HEK293T (cell line): ENCODE measurements at regions of chr12 and their contacts with region 1.

Region 1: GRCh38 chr12:64696080-64696741 is 63.0 kb downstream of the GNS start:
- DNase-seq: peak; percentile 29

Region 2: GRCh38 chr12:64550755-64551154 is 145.5 kb before region 1 on chr12:
- CTCF ChIA-PET with region 1: interaction called, 31 read pairs
- POLR2A ChIA-PET with region 1: no interaction called
- DNase-seq: no peak

Region 3: GRCh38 chr12:64608901-64609535 is 87.2 kb before region 1 on chr12:
- CTCF ChIA-PET with region 1: interaction called, 12 read pairs
- POLR2A ChIA-PET with region 1: interaction called, 6 read pairs
- DNase-seq: peak; percentile 59

Region 4: GRCh38 chr12:64669270-64669842 is 26.9 kb before region 1 on chr12:
- CTCF ChIA-PET with region 1: no interaction called
- POLR2A ChIA-PET with region 1: no interaction called
- DNase-seq: no peak

Region 5: DNA sequence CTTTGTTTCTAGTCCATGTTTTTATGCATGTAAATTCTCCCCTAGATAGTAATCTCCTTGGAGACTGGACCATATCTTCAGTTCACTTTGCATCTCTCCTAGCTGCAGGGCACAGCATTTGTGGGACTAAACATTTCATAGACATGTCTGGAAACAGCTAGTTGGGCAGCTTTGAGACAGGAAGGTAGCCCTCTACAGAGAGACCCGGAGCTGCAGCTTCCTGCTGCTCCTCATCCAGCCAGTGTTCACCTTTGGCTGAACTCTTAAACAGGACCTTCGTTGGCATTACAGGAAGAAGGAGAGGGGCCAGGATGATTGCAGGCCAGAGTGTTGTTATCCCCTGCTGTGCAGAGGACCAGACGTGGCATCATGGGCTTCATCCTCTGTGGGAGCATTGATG is 10.1 kb after region 1 on chr12:
- CTCF ChIA-PET with region 1: interaction called, 13 read pairs
- POLR2A ChIA-PET with region 1: no interaction called
- DNase-seq: no peak

Region 6: GRCh38 chr12:64746663-64747062 is 50.5 kb after region 1 on chr12:
- CTCF ChIA-PET with region 1: no interaction called
- POLR2A ChIA-PET with region 1: no interaction called
- DNase-seq: no peak